Breast epithelium (tissue), 4 donors: ENCODE measurements at regions of chr10 and their contacts with region 1.

Region 1: GRCh38 chr10:94607111-94607510 is 61.5 kb downstream of the HELLS start:
- DNase-seq: no peak
- H3K4me3 ChIP-seq: no peak overlapping the region
- H3K27ac ChIP-seq: no peak overlapping the region
- H3K4me1 ChIP-seq: no peaks in the 10 kb centered on the region
- H3K27me3 ChIP-seq: no peaks in the 10 kb centered on the region
- CTCF ChIP-seq: no peak
- POLR2A ChIP-seq: no peak

Region 2: DNA sequence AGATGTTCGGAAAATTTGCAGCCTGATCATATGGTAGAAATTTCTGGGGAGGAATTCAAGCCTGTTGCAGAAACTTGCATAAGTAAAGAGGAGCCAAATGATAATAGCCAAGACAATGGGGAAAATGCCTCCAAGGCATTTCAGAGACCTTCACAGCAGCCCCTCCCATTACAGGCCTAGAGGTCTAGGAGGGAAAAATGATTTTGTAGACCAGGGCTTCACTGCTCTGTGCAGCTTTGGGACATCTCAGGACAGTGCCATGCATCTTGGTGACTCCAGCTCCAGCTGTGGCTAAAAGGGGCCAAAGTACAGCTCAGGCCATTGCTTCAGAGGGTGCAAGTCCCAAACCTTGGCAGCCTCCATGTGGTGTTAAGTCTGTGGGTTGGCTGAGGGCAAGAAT is 25.8 kb after region 1 on chr10:
- intact Hi-C with region 1: loop called (anchors 1 kb)
- DNase-seq: no peak
- H3K4me3 ChIP-seq: no peak overlapping the region
- H3K27ac ChIP-seq: no peak overlapping the region
- H3K4me1 ChIP-seq: no peaks in the 10 kb centered on the region
- H3K27me3 ChIP-seq: no peaks in the 10 kb centered on the region
- CTCF ChIP-seq: no peak
- POLR2A ChIP-seq: no peak